Activated CD4-positive, alpha-beta memory T cell treated with anti-CD3 and anti-CD28 coated beads for 36 hours (primary cell): ENCODE measurements at regions of chr11 and their contacts with region 1.

Region 1: DNA sequence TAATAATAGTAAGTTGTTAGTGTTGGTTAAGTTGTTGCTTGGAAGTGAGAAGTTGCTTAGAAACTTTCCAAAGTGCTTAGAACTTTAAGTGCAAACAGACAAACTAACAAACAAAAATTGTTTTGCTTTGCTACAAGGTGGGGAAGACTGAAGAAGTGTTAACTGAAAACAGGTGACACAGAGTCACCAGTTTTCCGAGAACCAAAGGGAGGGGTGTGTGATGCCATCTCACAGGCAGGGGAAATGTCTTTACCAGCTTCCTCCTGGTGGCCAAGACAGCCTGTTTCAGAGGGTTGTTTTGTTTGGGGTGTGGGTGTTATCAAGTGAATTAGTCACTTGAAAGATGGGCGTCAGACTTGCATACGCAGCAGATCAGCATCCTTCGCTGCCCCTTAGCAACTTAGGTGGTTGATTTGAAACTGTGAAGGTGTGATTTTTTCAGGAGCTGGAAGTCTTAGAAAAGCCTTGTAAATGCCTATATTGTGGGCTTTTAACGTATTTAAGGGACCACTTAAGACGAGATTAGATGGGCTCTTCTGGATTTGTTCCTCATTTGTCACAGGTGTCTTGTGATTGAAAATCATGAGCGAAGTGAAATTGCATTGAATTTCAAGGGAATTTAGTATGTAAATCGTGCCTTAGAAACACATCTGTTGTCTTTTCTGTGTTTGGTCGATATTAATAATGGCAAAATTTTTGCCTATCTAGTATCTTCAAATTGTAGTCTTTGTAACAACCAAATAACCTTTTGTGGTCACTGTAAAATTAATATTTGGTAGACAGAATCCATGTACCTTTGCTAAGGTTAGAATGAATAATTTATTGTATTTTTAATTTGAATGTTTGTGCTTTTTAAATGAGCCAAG is 2.7 kb downstream of the NEAT1 start:
- DNase-seq: peak; percentile 91
- H3K4me3 Mint-ChIP-seq: peak overlapping the region; percentile 97
- H3K27ac Mint-ChIP-seq: peak overlapping the region; percentile 100
- H3K4me1 Mint-ChIP-seq: peaks cover 56% of the 10 kb centered on the region
- H3K27me3 Mint-ChIP-seq: peaks cover 24% of the 10 kb centered on the region

Region 2: GRCh38 chr11:65477149-65477965 is 52.0 kb after region 1 on chr11:
- CTCF ChIA-PET with region 1: no interaction called
- POLR2A ChIA-PET with region 1: interaction called, 258 read pairs
- intact Hi-C with region 1: loop called (anchors 1 kb)
- DNase-seq: peak; percentile 96
- H3K4me3 Mint-ChIP-seq: peak overlapping the region; percentile 91
- H3K27ac Mint-ChIP-seq: peak overlapping the region; percentile 95
- H3K4me1 Mint-ChIP-seq: peaks cover 19% of the 10 kb centered on the region
- H3K27me3 Mint-ChIP-seq: no peaks in the 10 kb centered on the region

Region 3: GRCh38 chr11:65588199-65589054 is 163.1 kb after region 1 on chr11:
- CTCF ChIA-PET with region 1: no interaction called
- POLR2A ChIA-PET with region 1: no interaction called
- intact Hi-C with region 1: no loop called
- DNase-seq: peak; percentile 90
- H3K4me3 Mint-ChIP-seq: peak overlapping the region; percentile 57
- H3K27ac Mint-ChIP-seq: peak overlapping the region; percentile 95
- H3K4me1 Mint-ChIP-seq: peaks cover 30% of the 10 kb centered on the region
- H3K27me3 Mint-ChIP-seq: no peaks in the 10 kb centered on the region

Region 4: GRCh38 chr11:65658174-65659021 is 233.1 kb after region 1 on chr11:
- CTCF ChIA-PET with region 1: no interaction called
- POLR2A ChIA-PET with region 1: no interaction called
- intact Hi-C with region 1: no loop called
- DNase-seq: no peak
- H3K4me3 Mint-ChIP-seq: no peak overlapping the region
- H3K27ac Mint-ChIP-seq: peak overlapping the region; percentile 62
- H3K4me1 Mint-ChIP-seq: peaks cover 63% of the 10 kb centered on the region
- H3K27me3 Mint-ChIP-seq: no peaks in the 10 kb centered on the region

Region 5: DNA sequence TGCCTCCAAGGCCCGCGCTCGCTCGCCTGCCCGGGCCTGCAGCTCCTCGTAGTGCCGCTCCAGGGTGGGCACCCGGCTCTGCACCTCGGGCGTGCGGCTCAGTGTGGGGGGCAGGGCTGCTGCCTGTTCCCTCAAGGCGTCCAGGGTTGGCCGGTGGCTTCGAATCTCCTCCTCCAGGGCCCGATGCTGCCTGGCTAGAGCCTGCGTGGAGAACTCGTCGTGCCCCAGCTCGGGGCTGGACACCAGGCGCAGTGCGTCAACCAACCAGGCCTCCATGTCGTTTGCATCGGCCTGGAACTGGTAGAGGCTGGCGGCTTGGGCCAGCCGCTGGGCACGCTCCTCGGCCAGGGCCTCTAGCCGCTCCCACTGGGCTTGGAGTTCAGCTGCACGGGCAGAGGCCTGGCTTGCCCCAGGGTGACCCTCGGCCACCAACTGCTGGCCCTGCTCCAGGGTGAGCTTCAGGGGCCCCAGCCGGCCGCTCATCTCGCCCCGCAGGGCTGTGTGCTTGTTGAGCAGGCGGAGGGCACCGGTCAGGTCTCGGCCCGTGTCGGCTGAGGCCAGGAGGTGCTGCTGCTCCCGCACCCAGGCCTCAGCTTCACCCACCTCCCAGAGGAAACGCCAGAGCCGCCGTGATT is 1279.5 kb after region 1 on chr11:
- CTCF ChIA-PET with region 1: no interaction called
- POLR2A ChIA-PET with region 1: no interaction called
- intact Hi-C with region 1: no loop called
- DNase-seq: no peak
- H3K4me3 Mint-ChIP-seq: no peak overlapping the region
- H3K27ac Mint-ChIP-seq: no peak overlapping the region
- H3K4me1 Mint-ChIP-seq: no peaks in the 10 kb centered on the region
- H3K27me3 Mint-ChIP-seq: no peaks in the 10 kb centered on the region